ENCODE measurements at regions of chr20 and their contacts with region 1.

Region 1: DNA sequence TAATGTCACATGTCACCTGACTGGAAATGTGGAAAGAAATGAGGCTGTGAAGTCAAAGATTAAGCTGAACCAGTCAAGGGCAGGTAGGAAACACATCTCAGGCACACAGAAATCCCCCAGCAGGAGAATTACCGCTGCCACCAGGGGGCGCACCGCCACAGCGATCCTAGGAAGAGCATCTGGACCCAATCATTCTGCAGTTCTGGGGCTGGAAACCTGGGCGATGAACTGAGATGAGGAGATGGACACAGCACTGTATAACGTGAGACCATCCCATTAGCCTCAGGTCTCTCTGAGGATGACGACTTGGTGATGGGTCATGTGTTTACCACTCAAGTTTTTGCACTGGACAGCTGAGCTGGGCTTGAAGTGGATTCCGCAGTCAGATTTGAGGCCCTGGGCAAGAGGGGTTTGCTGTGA is 6.5 kb upstream of the SLC24A3 start:
- DNase-seq: peak; percentile 57
- ATAC-seq: no peak
- H3K4me3 Mint-ChIP-seq: no peak overlapping the region
- H3K27ac Mint-ChIP-seq: no peak overlapping the region
- H3K4me1 Mint-ChIP-seq: no peaks in the 10 kb centered on the region
- H3K27me3 Mint-ChIP-seq: peaks cover 57% of the 10 kb centered on the region
- CTCF ChIP-seq: peak; percentile 88

Region 2: GRCh38 chr20:19583532-19584175 is 377.7 kb after region 1 on chr20:
- CTCF ChIA-PET with region 1: no interaction called
- POLR2A ChIA-PET with region 1: no interaction called
- intact Hi-C with region 1: loop called (anchors 10 kb)
- DNase-seq: no peak
- ATAC-seq: no peak
- H3K4me3 Mint-ChIP-seq: no peak overlapping the region
- H3K27ac Mint-ChIP-seq: no peak overlapping the region
- H3K4me1 Mint-ChIP-seq: no peaks in the 10 kb centered on the region
- H3K27me3 Mint-ChIP-seq: peaks cover 11% of the 10 kb centered on the region
- CTCF ChIP-seq: no peak